ENCODE measurements at regions of chr9 and their contacts with region 1.

Region 1: GRCh38 chr9:124420991-124421543 is 5.8 kb upstream of the PSMB7 start:
- DNase-seq: no peak
- H3K4me3 ChIP-seq: no peak overlapping the region
- H3K27ac ChIP-seq: no peak overlapping the region
- H3K4me1 ChIP-seq: no peaks in the 10 kb centered on the region
- H3K27me3 ChIP-seq: peaks cover 4 to 12% of the 10 kb centered on the region in 2 experiments
- CTCF ChIP-seq: no peak
- POLR2A ChIP-seq: no peak

Region 2: GRCh38 chr9:124447297-124447661 is 26.2 kb after region 1 on chr9:
- CTCF ChIA-PET with region 1: interaction called, 4 read pairs
- POLR2A ChIA-PET with region 1: no interaction called
- dilution Hi-C with region 1: no loop called
- intact Hi-C with region 1: loop called (anchors 1 kb)
- DNase-seq: no peak
- H3K4me3 ChIP-seq: no peak overlapping the region
- H3K27ac ChIP-seq: no peak overlapping the region
- H3K4me1 ChIP-seq: peaks cover 3% of the 10 kb centered on the region
- H3K27me3 ChIP-seq: peaks cover 19 to 22% of the 10 kb centered on the region in 2 experiments
- CTCF ChIP-seq: no peak
- POLR2A ChIP-seq: no peak

Region 3: GRCh38 chr9:124480621-124480981 is 59.5 kb after region 1 on chr9:
- CTCF ChIA-PET with region 1: interaction called, 6 read pairs
- POLR2A ChIA-PET with region 1: no interaction called
- dilution Hi-C with region 1: no loop called
- intact Hi-C with region 1: loop called (anchors 1 kb)
- DNase-seq: peak; percentile 14
- H3K4me3 ChIP-seq: no peak overlapping the region
- H3K27ac ChIP-seq: no peak overlapping the region
- H3K4me1 ChIP-seq: no peaks in the 10 kb centered on the region
- H3K27me3 ChIP-seq: peaks cover 20 to 35% of the 10 kb centered on the region in 2 experiments
- CTCF ChIP-seq: peak; percentile 41 to 50
- POLR2A ChIP-seq: no peak

Measured in endothelial cell of umbilical vein (primary cell).